ENCODE measurements at regions of chr15 and their contacts with region 1.

Region 1: DNA sequence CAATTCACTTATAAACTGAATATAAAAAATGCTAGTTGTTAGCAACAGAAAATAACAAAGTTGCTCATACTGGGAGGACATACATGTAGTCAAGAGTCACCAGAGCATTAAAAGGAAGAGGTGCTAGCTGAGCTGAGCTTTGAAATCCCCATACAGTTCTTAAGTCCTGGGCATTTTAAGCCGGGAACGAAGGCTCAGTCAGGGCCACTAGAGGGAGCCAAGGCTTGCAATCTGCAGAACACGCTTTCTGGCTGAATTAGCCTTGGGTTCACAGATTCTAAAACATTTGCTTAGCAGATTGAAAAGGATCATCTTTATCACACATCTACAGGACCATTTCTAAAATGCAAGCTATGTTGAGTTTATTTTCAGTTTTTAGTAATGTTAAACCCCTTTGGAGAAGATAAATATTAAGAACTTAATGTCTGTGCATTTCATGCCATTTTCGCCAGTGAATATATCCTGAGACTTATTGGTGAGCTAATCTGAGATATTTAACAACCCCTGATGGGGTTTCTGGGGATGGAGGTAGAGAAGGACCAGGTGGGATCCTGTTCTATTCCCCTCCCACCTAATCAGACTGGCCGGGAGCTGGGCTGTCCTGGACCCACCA is 26.3 kb upstream of the MNS1 start:
- DNase-seq: peak; percentile 43 to 85 (median 74)
- H3K4me3 ChIP-seq: no peak overlapping the region
- H3K27ac ChIP-seq: no peak overlapping the region
- H3K27me3 ChIP-seq: no peaks in the 10 kb centered on the region
- CTCF ChIP-seq: peak; percentile 64 to 90 (median 82)

Region 2: DNA sequence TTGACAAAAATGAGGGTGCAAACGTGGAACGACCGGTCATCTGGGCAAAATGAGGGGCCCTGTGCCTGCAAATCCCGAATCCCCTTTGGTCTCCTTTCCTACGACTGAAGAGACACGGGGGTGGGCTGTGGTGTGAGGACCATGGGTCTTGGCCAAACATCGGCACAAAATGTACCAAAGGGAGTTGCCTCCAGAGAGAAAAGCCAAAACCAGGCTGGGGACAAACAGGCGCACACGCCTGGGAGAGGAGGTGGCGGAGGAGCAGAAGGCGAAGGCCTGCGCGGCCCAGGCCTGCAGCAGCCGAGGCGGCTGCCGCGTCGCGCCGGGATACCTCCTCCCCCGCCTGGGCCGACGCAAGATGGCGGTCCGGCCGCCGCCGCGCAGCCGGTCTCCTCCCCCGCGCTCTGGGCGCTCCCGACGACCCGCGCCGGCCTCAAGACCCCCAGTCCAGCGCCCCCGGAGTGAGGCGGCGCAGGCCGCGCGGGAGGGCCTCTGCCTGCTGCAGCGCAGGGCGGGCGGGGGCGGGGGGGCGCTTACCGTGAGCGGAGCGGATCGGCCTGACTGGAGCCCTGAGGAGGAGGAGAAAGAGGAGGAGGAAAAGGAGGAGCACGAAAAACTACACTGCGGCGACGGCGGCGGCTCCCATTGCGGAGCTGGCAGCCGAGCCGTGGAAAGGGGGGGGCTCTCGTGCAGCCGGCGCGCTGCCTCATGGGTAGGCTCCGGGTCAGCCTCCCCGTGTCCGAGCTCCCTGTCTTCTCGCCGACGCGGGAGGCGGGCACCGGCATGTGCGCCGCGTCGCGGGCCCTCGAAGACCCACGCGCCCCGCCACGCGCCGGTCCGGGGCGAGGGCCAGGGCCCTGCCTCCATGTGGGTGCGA is 241.9 kb after region 1 on chr15 and contains the start of gene ZNF280D:
- intact Hi-C with region 1: loop called in 1 of 2 experiments (anchors 10 kb)
- DNase-seq: peak; percentile 81 to 90 (median 86)
- H3K4me3 ChIP-seq: peak within 1 kb of the TSS; percentile 54 to 84 (median 73)
- H3K27ac ChIP-seq: peak within 1 kb of the TSS; percentile 85 to 100 (median 98)
- H3K27me3 ChIP-seq: no peaks in the 10 kb centered on the region
- CTCF ChIP-seq: peak in 20 of 56 donors; percentile 7 to 58 (median 27)
- total RNA-seq, gene ZNF280D: 44.4 to 121 (median 75.2) TPM

Region 3: GRCh38 chr15:56886932-56887781 is 395.9 kb after region 1 on chr15:
- intact Hi-C with region 1: loop called in 1 of 2 experiments (anchors 10 kb)
- DNase-seq: peak; percentile 83 to 96 (median 92)
- H3K4me3 ChIP-seq: peak overlapping the region; percentile 57 to 94 (median 81)
- H3K27ac ChIP-seq: peak overlapping the region; percentile 86 to 100 (median 99)
- H3K27me3 ChIP-seq: no peaks in the 10 kb centered on the region
- CTCF ChIP-seq: peak in 35 of 56 donors; percentile 5 to 61 (median 34)

Region 4: DNA sequence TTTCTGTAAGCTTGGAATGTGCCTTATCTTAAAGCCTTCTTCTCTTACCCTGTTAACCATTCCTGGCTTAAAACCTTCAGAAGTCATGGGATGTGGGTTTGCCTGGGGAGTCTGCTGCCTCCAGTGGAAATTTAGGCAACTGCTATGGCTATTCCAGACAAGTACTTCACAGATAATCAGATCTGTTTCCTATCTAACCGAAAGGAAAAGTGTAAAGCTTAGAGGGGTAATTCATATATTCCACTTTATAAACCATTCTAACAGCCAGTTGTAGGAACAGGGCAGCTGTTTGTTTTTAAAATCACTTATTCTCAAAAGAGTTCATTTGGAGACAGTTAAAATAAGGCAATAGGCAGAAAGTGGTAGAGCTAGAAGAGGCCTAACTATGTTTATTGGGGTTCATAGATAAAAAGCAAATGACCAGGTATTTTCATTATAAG is 647.2 kb after region 1 on chr15:
- intact Hi-C with region 1: loop called in 1 of 2 experiments (anchors 10 kb)
- DNase-seq: peak in 1 of 10 donors; percentile 44
- H3K4me3 ChIP-seq: no peak overlapping the region
- H3K27ac ChIP-seq: peak overlapping the region in 33 of 59 donors; percentile 1 to 63 (median 34)
- H3K27me3 ChIP-seq: no peaks in the 10 kb centered on the region
- CTCF ChIP-seq: peak; percentile 49 to 89 (median 74)

Region 5: DNA sequence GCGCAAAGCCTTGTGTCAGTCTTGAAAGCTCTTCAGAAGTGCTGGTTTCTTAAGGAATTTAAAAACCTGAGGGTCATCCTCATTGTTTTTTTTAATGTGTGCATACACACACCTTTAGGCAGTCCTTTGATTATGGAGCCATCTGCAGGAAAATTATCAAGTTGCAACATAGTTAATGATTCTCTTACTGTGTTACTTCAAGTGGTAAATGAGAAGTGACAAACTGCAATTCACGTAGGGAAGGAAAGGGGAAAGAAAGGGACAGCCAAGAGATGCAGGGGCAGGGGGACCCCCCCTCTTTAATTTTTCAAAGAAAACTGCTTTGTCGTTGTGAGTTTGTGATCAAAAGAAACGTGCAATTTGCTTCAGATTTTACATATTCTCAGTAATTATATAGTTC is 722.6 kb after region 1 on chr15:
- intact Hi-C with region 1: loop called in 1 of 2 experiments (anchors 10 kb)
- DNase-seq: no peak
- H3K4me3 ChIP-seq: peak overlapping the region in 12 of 59 donors; percentile 4 to 34 (median 18)
- H3K27ac ChIP-seq: peak overlapping the region in 38 of 59 donors; percentile 5 to 70 (median 38)
- H3K27me3 ChIP-seq: no peaks in the 10 kb centered on the region
- CTCF ChIP-seq: peak; percentile 22 to 80 (median 63)

Region 6: GRCh38 chr15:57527382-57528091 is 1036.3 kb after region 1 on chr15:
- intact Hi-C with region 1: loop called in 1 of 2 experiments (anchors 10 kb)
- DNase-seq: peak in 1 of 10 donors; percentile 36
- H3K4me3 ChIP-seq: no peak overlapping the region
- H3K27ac ChIP-seq: peak overlapping the region in 16 of 59 donors; percentile 4 to 68 (median 40)
- H3K27me3 ChIP-seq: peaks cover 0 to 2% (median 0%) of the 10 kb centered on the region in 45 donors
- CTCF ChIP-seq: peak; percentile 58 to 97 (median 79)

Measured in dorsolateral prefrontal cortex (tissue), 120 donors.